Activated CD4-positive, alpha-beta T cell treated with anti-CD3 and anti-CD28 coated beads for 36 hours (primary cell): ENCODE measurements at regions of chr6 and their contacts with region 1.

Region 1: GRCh38 chr6:16332175-16332542 is 93.8 kb downstream of the GMPR start:
- DNase-seq: peak; percentile 91
- ATAC-seq: peak; percentile 98
- H3K4me3 Mint-ChIP-seq: no peak overlapping the region
- H3K27ac Mint-ChIP-seq: no peak overlapping the region
- H3K4me1 Mint-ChIP-seq: no peaks in the 10 kb centered on the region
- H3K27me3 Mint-ChIP-seq: no peaks in the 10 kb centered on the region

Region 2: DNA sequence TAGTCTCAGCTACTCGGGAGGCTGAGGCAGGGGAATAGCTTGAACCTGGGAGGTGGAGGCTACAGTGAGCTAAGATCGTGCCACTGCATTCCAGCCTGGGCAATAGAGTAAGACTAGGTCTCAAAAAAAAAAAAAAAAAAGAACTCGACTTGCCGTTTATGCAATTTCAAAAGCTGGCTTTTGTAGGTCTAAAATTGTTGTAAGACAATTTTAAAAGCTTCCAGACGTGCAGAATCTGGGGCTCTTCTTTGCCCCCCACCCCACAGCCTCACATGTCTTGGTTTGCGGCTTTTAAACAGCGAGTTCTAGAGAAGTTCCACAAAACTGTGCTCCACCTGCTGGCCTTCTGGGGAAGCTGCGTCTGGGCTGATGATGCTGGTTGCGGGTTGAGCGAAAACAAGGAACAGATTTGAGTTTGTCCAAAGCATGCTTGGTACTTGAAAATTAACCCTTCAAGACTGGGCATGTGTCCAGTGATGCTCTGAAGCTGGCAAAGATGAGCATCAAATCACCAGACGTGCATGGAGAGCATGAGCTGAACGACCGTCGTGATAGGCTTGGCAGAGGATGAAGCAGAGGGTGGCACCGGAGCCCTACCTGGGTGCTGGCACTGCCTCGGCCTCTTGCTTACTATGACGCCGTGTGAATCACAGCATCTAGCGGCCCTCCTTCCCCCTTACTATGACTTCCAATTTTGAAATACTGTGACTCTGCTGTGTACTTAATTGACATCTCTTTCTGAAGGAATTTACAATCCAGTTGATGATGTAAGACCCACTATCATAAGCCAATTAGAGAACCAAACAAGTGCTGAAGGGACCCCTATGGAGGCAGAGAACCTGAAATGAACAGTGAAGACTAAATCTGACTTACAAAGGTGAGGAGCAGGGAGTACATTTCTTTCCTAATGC is 77.6 kb after region 1 on chr6:
- CTCF ChIA-PET with region 1: interaction called, 15 read pairs
- POLR2A ChIA-PET with region 1: no interaction called
- intact Hi-C with region 1: loop called (anchors 1 kb)
- DNase-seq: peak; percentile 77
- ATAC-seq: peak; percentile 50
- H3K4me3 Mint-ChIP-seq: no peak overlapping the region
- H3K27ac Mint-ChIP-seq: peak overlapping the region; percentile 30
- H3K4me1 Mint-ChIP-seq: peaks cover 41% of the 10 kb centered on the region
- H3K27me3 Mint-ChIP-seq: no peaks in the 10 kb centered on the region

Region 3: GRCh38 chr6:16535564-16535963 is 203.4 kb after region 1 on chr6:
- CTCF ChIA-PET with region 1: no interaction called
- POLR2A ChIA-PET with region 1: no interaction called
- intact Hi-C with region 1: no loop called
- DNase-seq: no peak
- ATAC-seq: no peak
- H3K4me3 Mint-ChIP-seq: no peak overlapping the region
- H3K27ac Mint-ChIP-seq: no peak overlapping the region
- H3K4me1 Mint-ChIP-seq: peaks cover 45% of the 10 kb centered on the region
- H3K27me3 Mint-ChIP-seq: no peaks in the 10 kb centered on the region

Region 4: GRCh38 chr6:16770701-16771569 is 438.8 kb after region 1 on chr6:
- CTCF ChIA-PET with region 1: interaction called, 6 read pairs
- POLR2A ChIA-PET with region 1: no interaction called
- intact Hi-C with region 1: loop called in 1 of 2 experiments (anchors 1 kb)
- DNase-seq: peak; percentile 89
- ATAC-seq: peak; percentile 70
- H3K4me3 Mint-ChIP-seq: no peak overlapping the region
- H3K27ac Mint-ChIP-seq: no peak overlapping the region
- H3K4me1 Mint-ChIP-seq: peaks cover 49% of the 10 kb centered on the region
- H3K27me3 Mint-ChIP-seq: no peaks in the 10 kb centered on the region

Region 5: DNA sequence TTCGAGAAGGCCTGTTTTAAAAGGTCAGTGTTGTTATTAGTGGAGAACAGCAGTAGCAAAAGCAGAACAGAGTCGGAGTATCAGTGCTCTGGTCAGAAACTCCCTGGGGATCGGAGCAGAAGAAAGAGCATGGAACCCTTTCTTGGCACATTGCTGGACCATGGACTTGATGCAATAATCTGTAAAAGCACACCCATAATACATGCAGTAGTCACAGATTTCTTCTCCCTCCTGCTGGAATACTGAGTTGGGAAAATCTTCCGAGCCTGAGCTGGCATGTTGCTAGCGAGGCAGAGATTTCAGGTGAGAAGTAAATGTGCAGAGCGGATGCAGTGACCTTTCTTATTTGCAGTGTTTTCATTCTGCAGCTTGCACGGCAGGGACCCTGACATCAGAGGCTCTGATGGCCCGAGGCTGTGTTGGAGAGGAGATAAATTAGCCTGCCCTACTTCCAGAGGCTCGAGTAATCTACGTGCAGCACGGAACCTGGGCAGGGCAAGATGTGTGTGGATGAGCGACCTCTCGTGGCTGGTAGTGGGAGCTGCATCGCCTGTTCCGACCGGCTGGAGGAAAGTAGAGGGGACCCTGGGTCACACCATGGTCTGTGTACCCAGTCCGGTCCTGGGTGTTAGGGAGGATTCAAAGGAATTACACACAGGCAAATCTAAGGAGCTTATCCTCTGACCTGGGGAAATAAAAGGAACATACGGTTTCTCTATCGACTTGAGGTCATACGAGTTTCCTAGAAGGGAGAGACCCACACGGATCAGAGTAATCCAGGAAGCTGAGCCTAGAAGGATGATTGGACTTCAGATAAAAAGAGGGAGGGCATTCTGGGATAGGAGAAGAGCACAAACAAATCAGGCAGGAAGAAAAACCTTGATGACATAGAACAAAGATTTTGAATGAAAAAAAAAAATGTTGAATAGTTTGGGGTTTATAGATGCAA is 632.7 kb after region 1 on chr6:
- CTCF ChIA-PET with region 1: interaction called, 5 read pairs
- POLR2A ChIA-PET with region 1: no interaction called
- intact Hi-C with region 1: loop called (anchors 1 kb)
- DNase-seq: peak; percentile 84
- ATAC-seq: peak; percentile 97
- H3K4me3 Mint-ChIP-seq: no peak overlapping the region
- H3K27ac Mint-ChIP-seq: no peak overlapping the region
- H3K4me1 Mint-ChIP-seq: peaks cover 15% of the 10 kb centered on the region
- H3K27me3 Mint-ChIP-seq: peaks cover 17% of the 10 kb centered on the region